Activated naive CD4-positive, alpha-beta T cell treated with anti-CD3 and anti-CD28 coated beads for 36 hours (primary cell): ENCODE measurements at regions of chr10 and their contacts with region 1.

Region 1: DNA sequence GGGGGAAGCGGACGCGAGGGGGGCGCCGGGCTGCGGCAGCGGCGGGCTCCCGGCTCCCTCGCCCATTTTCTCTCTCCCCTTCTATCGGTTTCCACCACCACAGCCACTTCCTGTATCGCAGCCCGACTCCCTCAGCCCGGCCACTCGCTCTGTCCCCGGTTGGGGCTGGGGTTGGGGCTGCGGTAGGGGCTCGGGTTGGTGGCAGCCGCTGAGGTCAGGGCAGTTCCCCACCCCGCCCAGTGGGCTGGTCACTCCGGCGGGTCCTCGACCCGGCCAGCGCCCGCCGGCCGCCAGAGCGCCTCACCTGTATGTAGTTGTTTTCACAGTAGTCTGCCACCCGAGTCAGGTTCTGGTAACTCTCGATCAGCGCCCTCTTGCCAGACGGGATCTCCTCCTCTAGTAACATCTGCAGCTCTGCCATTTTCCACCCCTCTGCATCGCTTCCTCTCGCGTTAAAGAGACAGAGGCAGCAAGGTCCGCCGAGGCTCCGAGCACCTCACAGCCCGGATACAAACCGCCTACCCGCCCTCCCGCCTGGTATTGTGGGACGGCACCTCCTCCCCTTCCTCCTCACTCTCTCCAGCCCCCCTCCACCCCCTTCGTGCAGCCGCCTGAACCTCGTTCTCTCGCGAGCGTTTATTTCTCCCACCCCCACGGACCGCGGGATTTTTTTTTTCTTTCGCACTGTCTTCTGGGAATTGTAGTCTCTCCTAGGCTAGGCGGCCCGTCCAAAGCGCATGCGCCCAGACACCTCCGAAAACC is at the start of gene ABI1:
- DNase-seq: peak; percentile 98
- H3K4me3 Mint-ChIP-seq: peak within 1 kb of the TSS; percentile 98
- H3K27ac Mint-ChIP-seq: peak within 1 kb of the TSS; percentile 99
- H3K4me1 Mint-ChIP-seq: peaks cover 30% of the 10 kb centered on the region
- H3K27me3 Mint-ChIP-seq: no peaks in the 10 kb centered on the region
- total RNA-seq, gene ABI1: 34.5 to 37.2 TPM

Region 2: DNA sequence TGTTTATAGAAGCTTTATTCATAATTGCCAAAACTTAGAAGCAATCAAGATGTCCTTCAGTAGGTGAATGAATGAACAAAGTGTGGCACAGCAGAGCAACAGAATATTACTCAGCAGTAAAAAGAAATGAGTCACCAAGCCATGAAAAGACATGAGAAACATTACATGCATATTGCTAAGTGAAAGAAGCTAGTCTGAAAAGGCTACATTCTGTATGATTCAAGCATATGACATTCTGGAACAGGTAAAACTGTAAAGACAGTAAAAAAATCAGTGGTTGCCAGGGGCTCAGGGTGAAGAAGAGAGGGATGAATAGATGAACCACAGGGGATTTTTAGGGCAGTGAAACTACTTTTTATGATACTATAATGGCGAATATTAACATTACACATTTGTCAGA is 503.4 kb before region 1 on chr10:
- CTCF ChIA-PET with region 1: no interaction called
- intact Hi-C with region 1: loop called (anchors 1 kb)
- DNase-seq: peak; percentile 32
- H3K4me3 Mint-ChIP-seq: no peak overlapping the region
- H3K27ac Mint-ChIP-seq: no peak overlapping the region
- H3K4me1 Mint-ChIP-seq: peaks cover 13% of the 10 kb centered on the region
- H3K27me3 Mint-ChIP-seq: no peaks in the 10 kb centered on the region

Region 3: GRCh38 chr10:26448706-26449435 is 411.8 kb before region 1 on chr10:
- CTCF ChIA-PET with region 1: no interaction called
- intact Hi-C with region 1: loop called (anchors 2 kb)
- DNase-seq: peak; percentile 85
- H3K4me3 Mint-ChIP-seq: peak overlapping the region; percentile 54
- H3K27ac Mint-ChIP-seq: peak overlapping the region; percentile 88
- H3K4me1 Mint-ChIP-seq: peaks cover 87% of the 10 kb centered on the region
- H3K27me3 Mint-ChIP-seq: no peaks in the 10 kb centered on the region

Region 4: DNA sequence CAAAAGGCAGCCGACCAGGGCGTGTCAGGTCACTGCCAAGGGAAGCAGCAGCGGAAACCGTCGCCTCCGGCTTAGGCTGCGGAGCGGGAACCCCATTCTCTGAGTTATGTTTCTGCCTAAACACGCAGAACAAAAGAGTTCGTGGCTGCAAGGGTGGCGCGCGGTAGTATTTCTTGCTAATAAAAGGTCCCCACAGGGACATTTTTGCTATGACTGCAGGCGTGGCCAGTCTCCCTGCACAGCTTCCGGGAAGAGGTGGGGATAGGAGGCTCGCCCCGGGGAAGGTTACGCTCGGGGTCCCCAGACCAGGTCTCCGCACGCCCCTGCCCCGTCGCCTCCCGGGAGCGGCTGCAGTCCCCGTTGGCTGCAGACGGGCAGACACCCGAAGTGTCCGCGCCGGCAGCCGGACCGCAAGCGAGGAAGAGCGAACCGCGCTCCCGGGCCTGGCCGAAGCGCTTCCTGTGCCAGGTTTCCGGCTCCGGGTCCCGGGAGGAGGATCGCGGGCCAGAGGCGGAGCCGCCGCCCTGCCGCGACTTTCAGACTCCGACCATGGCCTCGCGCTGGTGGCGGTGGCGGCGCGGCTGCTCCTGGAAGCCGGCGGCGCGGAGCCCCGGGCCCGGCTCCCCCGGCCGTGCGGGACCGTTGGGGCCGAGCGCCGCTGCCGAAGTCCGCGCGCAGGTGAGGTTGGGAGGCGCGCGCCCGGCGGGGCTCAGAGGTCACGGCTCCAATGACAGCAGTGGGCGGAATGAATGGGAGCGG is 163.3 kb before region 1 on chr10 and contains the start of gene PDSS1:
- CTCF ChIA-PET with region 1: no interaction called
- intact Hi-C with region 1: loop called (anchors 1 kb)
- DNase-seq: peak; percentile 72
- H3K4me3 Mint-ChIP-seq: peak within 1 kb of the TSS; percentile 96
- H3K27ac Mint-ChIP-seq: peak within 1 kb of the TSS; percentile 89
- H3K4me1 Mint-ChIP-seq: peaks cover 39% of the 10 kb centered on the region
- H3K27me3 Mint-ChIP-seq: no peaks in the 10 kb centered on the region
- total RNA-seq, gene PDSS1: 14.5 to 16.0 TPM

Region 5: GRCh38 chr10:26743091-26743490 is 117.5 kb before region 1 on chr10:
- CTCF ChIA-PET with region 1: interaction called, 3 read pairs
- intact Hi-C with region 1: loop called (anchors 2 kb)
- DNase-seq: no peak
- H3K4me3 Mint-ChIP-seq: no peak overlapping the region
- H3K27ac Mint-ChIP-seq: peak overlapping the region; percentile 20
- H3K4me1 Mint-ChIP-seq: peaks cover 25% of the 10 kb centered on the region
- H3K27me3 Mint-ChIP-seq: no peaks in the 10 kb centered on the region

Region 6: DNA sequence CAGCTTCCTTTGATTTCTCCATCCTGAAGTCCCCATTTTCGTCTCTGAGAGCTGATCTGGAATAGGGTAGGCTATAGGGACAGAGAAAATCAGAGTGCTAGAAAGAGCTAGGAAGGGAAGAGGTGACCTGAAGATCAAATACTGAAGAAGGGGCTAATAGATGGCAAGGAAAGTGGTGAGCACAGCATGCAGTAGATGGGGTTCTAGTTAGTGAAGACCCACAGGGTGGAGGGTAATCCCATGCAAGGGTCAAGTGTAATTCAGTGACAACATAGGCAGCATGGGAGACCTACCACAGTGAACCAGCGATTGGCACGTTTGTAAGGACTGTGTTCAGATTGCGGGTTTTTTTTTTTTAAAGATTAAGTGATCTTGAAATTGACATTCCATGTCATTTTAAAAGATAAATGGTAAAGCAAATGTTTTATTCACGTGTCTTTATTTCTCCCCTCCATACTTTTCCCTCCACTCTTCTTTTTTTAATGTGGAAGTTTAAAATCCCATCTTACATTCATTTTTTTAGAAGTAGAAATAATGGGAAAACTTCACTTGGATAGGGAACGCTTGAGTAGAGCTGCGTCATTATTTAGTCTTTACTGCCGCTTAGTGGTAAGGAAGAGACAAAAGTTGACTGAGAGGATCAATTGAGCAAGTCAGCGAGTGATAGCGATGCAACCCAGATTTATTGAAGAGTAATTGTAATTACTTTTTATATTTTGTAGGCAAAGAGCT is 21.1 kb after region 1 on chr10:
- CTCF ChIA-PET with region 1: interaction called, 10 read pairs
- intact Hi-C with region 1: loop called (anchors 1 kb)
- DNase-seq: no peak
- H3K4me3 Mint-ChIP-seq: no peak overlapping the region
- H3K27ac Mint-ChIP-seq: no peak overlapping the region
- H3K4me1 Mint-ChIP-seq: peaks cover 2% of the 10 kb centered on the region
- H3K27me3 Mint-ChIP-seq: peaks cover 5% of the 10 kb centered on the region

Region 7: GRCh38 chr10:26911811-26912461 is 51.3 kb after region 1 on chr10:
- CTCF ChIA-PET with region 1: no interaction called
- intact Hi-C with region 1: no loop called
- DNase-seq: no peak
- H3K4me3 Mint-ChIP-seq: no peak overlapping the region
- H3K27ac Mint-ChIP-seq: no peak overlapping the region
- H3K4me1 Mint-ChIP-seq: no peaks in the 10 kb centered on the region
- H3K27me3 Mint-ChIP-seq: no peaks in the 10 kb centered on the region

Region 8: DNA sequence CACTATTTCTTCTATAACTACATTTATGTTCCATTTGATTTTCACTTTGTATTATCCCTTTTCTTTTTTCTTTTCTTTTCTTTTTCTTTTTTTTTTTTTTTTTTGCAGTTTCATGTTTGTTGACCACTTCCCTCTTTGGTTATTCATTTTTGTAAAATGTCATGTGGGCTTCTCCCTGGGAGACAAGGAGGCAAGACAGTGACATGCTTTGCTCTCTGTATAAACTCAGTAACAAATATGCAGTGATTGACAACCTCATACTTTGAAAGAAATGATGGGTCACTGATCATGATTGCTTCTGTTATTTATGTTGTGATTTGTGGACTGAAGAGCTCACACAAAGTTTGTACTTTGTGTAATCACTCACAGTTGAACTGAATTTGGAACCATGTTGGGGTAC is 90.3 kb after region 1 on chr10:
- CTCF ChIA-PET with region 1: no interaction called
- intact Hi-C with region 1: no loop called
- DNase-seq: no peak
- H3K4me3 Mint-ChIP-seq: no peak overlapping the region
- H3K27ac Mint-ChIP-seq: no peak overlapping the region
- H3K4me1 Mint-ChIP-seq: no peaks in the 10 kb centered on the region
- H3K27me3 Mint-ChIP-seq: peaks cover 6% of the 10 kb centered on the region

Region 9: DNA sequence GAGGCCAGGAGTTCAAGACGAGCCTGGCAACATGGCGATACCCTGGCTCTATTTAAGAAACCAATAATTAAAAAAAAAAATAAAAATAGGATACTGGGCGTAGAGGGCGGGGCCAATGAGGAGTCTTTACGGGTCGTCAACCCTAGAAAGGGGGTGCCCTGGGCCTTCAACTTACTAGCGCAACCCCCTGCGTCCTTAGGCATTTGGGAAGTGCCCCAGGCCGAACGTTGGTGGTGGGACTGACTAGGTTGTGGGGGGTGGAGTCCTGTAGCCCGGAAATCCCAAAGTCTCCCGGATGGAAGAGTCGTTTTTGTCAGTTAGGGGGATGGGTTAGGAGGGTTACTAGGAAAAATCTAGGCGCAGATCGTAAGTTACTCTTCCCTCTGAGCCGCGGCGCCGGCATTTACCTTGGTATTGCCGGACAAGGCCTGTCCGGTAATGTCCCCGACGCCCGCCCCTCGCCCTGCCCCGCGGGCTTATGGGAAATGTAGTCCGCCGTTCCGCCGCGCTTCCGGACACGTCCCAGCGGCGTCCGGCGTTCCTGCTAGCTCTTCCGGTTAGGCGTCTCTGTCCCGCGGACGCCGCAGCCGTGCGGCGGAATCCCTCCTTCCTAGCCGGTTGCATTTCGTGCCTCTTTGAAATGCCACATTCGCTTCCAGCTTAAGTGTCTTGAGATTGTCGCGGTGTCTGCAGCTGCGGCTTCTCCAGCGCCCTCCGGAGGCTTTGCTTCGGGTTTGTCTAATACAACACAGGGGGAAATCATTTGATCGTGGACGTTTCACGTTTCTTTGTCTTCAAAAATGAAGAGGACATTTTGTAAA is 381.2 kb after region 1 on chr10:
- CTCF ChIA-PET with region 1: no interaction called
- intact Hi-C with region 1: loop called (anchors 1 kb)
- DNase-seq: peak; percentile 89
- H3K4me3 Mint-ChIP-seq: peak overlapping the region; percentile 93
- H3K27ac Mint-ChIP-seq: peak overlapping the region; percentile 100
- H3K4me1 Mint-ChIP-seq: peaks cover 22% of the 10 kb centered on the region
- H3K27me3 Mint-ChIP-seq: no peaks in the 10 kb centered on the region